B cell (primary cell): ENCODE measurements at regions of chr3 and their contacts with region 1.

Region 1: DNA sequence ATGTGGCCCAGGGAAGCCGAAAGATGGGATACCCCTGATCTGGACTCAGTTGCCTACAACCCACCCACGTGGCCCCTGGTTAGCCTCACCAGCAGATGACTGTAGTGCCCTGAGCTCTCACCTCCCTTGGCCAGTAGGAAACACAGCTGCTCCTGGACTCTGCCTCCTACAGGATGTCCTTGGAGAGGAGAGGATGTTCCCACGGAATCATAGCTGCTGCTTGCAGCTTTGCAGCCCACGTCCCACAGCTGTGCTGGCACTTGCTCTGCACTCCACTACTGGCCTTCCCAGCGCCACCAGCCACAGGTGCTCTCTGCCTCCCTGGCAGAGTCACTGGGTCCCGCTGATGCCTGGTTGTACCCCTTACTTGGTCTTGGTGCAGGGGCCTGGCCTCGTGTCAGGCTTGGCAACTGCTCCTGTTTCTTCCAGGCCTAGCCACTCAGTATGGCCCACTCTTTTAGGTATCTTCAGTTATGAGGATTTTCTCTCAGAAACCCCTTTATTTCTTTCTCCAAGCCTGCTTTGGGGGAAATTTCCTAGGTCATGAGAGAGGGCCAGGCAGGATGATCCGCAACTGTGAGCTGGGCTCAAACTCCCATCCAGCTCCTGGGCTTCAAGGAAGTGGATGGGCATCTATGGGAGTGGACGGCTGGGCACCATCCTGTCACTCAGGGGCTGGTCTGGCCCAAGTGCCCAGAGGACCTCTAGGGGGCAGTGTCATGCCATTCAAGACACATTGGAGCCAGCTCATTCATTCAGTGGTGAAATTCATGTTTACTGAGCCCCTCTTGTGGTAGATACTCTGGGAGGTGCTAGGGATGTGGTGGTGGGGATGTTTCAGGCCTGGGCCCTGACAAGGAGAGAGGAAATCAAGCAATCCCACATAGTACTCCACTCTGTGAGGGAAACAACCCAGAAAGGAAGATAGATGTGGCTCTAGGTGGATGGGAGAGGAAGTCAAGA is 16.2 kb upstream of the VILL start:
- DNase-seq: peak; percentile 74
- ATAC-seq: peak; percentile 83
- H3K4me3 ChIP-seq: no peak overlapping the region
- H3K4me3 Mint-ChIP-seq: no peak overlapping the region
- H3K27ac ChIP-seq: no peak overlapping the region
- H3K27ac Mint-ChIP-seq: no peak overlapping the region
- H3K4me1 ChIP-seq: no peaks in the 10 kb centered on the region
- H3K4me1 Mint-ChIP-seq: no peaks in the 10 kb centered on the region
- H3K27me3 ChIP-seq: no peaks in the 10 kb centered on the region
- H3K27me3 Mint-ChIP-seq: peaks cover 5% of the 10 kb centered on the region
- CTCF ChIP-seq: peak; percentile 81

Region 2: GRCh38 chr3:37996785-37997301 is 22.4 kb after region 1 on chr3:
- CTCF ChIA-PET with region 1: interaction called, 46 read pairs
- POLR2A ChIA-PET with region 1: no interaction called
- intact Hi-C with region 1: no loop called
- DNase-seq: peak; percentile 85
- ATAC-seq: peak; percentile 68
- H3K4me3 ChIP-seq: no peak overlapping the region
- H3K4me3 Mint-ChIP-seq: peak overlapping the region; percentile 77
- H3K27ac ChIP-seq: no peak overlapping the region
- H3K27ac Mint-ChIP-seq: peak overlapping the region; percentile 93
- H3K4me1 ChIP-seq: peaks cover 27 to 44% of the 10 kb centered on the region in 2 donors
- H3K4me1 Mint-ChIP-seq: peaks cover 51% of the 10 kb centered on the region
- H3K27me3 ChIP-seq: no peaks in the 10 kb centered on the region
- H3K27me3 Mint-ChIP-seq: no peaks in the 10 kb centered on the region
- CTCF ChIP-seq: peak; percentile 88

Region 3: GRCh38 chr3:38004415-38005076 is 30.1 kb after region 1 on chr3:
- CTCF ChIA-PET with region 1: interaction called, 46 read pairs
- POLR2A ChIA-PET with region 1: no interaction called
- intact Hi-C with region 1: loop called (anchors 1 kb)
- DNase-seq: peak; percentile 55
- ATAC-seq: peak; percentile 47
- H3K4me3 ChIP-seq: no peak overlapping the region
- H3K4me3 Mint-ChIP-seq: no peak overlapping the region
- H3K27ac ChIP-seq: no peak overlapping the region
- H3K27ac Mint-ChIP-seq: peak overlapping the region; percentile 29
- H3K4me1 ChIP-seq: peaks cover 0 to under 1% of the 10 kb centered on the region in 2 donors
- H3K4me1 Mint-ChIP-seq: peaks cover 12% of the 10 kb centered on the region
- H3K27me3 ChIP-seq: no peaks in the 10 kb centered on the region
- H3K27me3 Mint-ChIP-seq: no peaks in the 10 kb centered on the region
- CTCF ChIP-seq: peak; percentile 50

Region 4: GRCh38 chr3:38039101-38039898 is 64.9 kb after region 1 on chr3 and contains the start of gene DLEC1:
- CTCF ChIA-PET with region 1: interaction called, 31 read pairs
- POLR2A ChIA-PET with region 1: no interaction called
- intact Hi-C with region 1: loop called (anchors 2 kb)
- DNase-seq: peak; percentile 86
- ATAC-seq: peak; percentile 65
- H3K4me3 ChIP-seq: peak within 1 kb of the TSS; percentile 64 to 71 (median 69)
- H3K4me3 Mint-ChIP-seq: peak within 1 kb of the TSS; percentile 93
- H3K27ac ChIP-seq: peak within 1 kb of the TSS; percentile 18 to 46
- H3K27ac Mint-ChIP-seq: peak within 1 kb of the TSS; percentile 54
- H3K4me1 ChIP-seq: peaks cover 12 to 22% of the 10 kb centered on the region in 2 donors
- H3K4me1 Mint-ChIP-seq: peaks cover 19% of the 10 kb centered on the region
- H3K27me3 ChIP-seq: peaks cover 0 to 4% (median 1%) of the 10 kb centered on the region in 4 experiments
- H3K27me3 Mint-ChIP-seq: peaks cover 9% of the 10 kb centered on the region
- CTCF ChIP-seq: no peak
- total RNA-seq, gene DLEC1: 0.83 and 2.1 TPM in 2 replicates

Region 5: GRCh38 chr3:38117748-38118420 is 143.5 kb after region 1 on chr3:
- CTCF ChIA-PET with region 1: interaction called, 10 read pairs
- POLR2A ChIA-PET with region 1: no interaction called
- intact Hi-C with region 1: no loop called
- DNase-seq: peak; percentile 71
- ATAC-seq: peak; percentile 84
- H3K4me3 ChIP-seq: no peak overlapping the region
- H3K4me3 Mint-ChIP-seq: no peak overlapping the region
- H3K27ac ChIP-seq: no peak overlapping the region
- H3K27ac Mint-ChIP-seq: no peak overlapping the region
- H3K4me1 ChIP-seq: peaks cover 19 to 23% of the 10 kb centered on the region in 2 donors
- H3K4me1 Mint-ChIP-seq: peaks cover 22% of the 10 kb centered on the region
- H3K27me3 ChIP-seq: no peaks in the 10 kb centered on the region
- H3K27me3 Mint-ChIP-seq: peaks cover 7% of the 10 kb centered on the region
- CTCF ChIP-seq: peak; percentile 81

Region 6: DNA sequence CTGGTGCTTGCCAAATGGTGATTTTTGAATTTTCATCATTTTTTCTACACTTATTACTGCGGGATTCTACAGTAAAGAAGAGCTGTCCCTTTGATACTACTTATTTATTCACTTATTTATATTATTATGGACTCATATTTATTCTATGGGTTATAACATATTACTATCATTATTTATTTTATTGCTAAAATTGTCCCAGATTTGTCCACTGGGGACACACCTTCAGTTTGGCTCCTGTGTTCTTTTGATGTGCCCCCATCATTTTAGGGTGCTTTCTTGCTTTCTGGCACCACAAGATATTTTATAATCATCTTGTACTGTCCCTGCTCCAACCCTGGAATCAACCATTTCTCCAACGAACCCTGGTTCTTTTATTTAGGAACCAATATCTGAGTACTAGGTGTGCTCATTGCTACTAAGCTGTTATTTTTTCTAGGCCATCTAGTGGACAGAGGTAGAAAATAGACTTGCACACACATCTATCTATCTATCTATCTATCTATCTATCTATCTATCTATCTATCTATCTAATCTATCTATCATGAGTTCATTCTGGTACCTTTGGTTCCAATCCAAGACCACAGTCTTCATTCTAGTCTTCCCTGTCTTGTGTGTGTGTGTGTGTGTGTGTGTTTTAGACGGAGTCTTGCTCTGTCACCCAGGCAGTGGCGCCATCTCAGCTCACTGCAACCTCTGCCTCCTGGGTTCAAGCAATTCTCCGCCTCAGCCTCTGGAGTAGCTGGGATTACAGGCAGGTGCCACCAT is 323.7 kb after region 1 on chr3:
- CTCF ChIA-PET with region 1: interaction called, 21 read pairs
- POLR2A ChIA-PET with region 1: no interaction called
- intact Hi-C with region 1: no loop called
- DNase-seq: peak; percentile 29
- ATAC-seq: no peak
- H3K4me3 ChIP-seq: no peak overlapping the region
- H3K4me3 Mint-ChIP-seq: no peak overlapping the region
- H3K27ac ChIP-seq: no peak overlapping the region
- H3K27ac Mint-ChIP-seq: no peak overlapping the region
- H3K4me1 ChIP-seq: no peaks in the 10 kb centered on the region
- H3K4me1 Mint-ChIP-seq: no peaks in the 10 kb centered on the region
- H3K27me3 ChIP-seq: no peaks in the 10 kb centered on the region
- H3K27me3 Mint-ChIP-seq: peaks cover 16% of the 10 kb centered on the region
- CTCF ChIP-seq: peak; percentile 66

Region 7: GRCh38 chr3:38479431-38480092 is 505.2 kb after region 1 on chr3:
- CTCF ChIA-PET with region 1: interaction called, 22 read pairs
- POLR2A ChIA-PET with region 1: no interaction called
- intact Hi-C with region 1: no loop called
- DNase-seq: peak; percentile 57
- ATAC-seq: peak; percentile 65
- H3K4me3 ChIP-seq: no peak overlapping the region
- H3K4me3 Mint-ChIP-seq: no peak overlapping the region
- H3K27ac ChIP-seq: no peak overlapping the region
- H3K27ac Mint-ChIP-seq: no peak overlapping the region
- H3K4me1 ChIP-seq: no peaks in the 10 kb centered on the region
- H3K4me1 Mint-ChIP-seq: no peaks in the 10 kb centered on the region
- H3K27me3 ChIP-seq: no peaks in the 10 kb centered on the region
- H3K27me3 Mint-ChIP-seq: no peaks in the 10 kb centered on the region
- CTCF ChIP-seq: peak; percentile 77